Right ventricle myocardium inferior (tissue), 1 donor: ENCODE measurements at regions of chr3 and their contacts with region 1.

Region 1: DNA sequence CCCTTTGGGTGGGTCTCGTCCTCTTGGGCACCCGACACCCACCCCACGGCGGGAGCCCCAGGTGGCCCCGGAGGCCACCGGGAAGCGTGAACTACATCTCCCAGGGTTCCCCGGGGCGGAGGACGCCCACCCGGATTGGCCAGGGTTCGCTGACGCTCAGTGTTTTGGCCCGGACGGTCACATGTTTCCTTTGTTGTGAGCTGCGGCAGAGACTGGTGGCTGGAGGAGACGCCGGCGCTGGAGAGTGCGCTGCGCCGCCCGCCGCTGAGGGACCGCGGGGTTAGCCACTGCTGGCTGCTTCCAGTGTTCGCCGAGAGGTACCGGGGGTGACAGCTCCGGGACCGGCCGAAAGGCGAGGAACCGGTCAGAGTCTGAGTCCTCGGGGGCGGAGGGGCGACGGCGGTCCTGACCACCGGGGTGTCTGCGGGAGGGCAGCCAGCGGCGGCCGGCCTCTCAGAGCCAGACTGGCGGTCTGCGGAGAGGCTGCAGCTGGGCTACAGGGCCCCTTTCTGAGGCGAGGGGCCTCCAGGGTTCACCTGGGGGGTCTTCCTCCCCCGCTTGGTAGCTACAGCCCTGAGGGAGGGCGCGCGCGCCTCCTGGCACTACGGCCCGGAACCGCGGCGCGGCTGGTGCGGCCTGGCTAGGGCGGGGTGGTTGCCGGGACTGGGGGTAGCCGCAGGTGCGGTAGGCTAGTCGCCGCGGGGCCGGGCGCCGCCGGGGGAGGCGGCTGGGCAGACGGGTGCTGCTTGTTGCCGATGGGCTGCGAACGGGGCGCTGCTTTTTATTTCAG is at the start of gene KLHL24:
- DNase-seq: peak; percentile 96
- ATAC-seq: peak; percentile 91
- total RNA-seq, gene KLHL24: 228 TPM

Region 2: DNA sequence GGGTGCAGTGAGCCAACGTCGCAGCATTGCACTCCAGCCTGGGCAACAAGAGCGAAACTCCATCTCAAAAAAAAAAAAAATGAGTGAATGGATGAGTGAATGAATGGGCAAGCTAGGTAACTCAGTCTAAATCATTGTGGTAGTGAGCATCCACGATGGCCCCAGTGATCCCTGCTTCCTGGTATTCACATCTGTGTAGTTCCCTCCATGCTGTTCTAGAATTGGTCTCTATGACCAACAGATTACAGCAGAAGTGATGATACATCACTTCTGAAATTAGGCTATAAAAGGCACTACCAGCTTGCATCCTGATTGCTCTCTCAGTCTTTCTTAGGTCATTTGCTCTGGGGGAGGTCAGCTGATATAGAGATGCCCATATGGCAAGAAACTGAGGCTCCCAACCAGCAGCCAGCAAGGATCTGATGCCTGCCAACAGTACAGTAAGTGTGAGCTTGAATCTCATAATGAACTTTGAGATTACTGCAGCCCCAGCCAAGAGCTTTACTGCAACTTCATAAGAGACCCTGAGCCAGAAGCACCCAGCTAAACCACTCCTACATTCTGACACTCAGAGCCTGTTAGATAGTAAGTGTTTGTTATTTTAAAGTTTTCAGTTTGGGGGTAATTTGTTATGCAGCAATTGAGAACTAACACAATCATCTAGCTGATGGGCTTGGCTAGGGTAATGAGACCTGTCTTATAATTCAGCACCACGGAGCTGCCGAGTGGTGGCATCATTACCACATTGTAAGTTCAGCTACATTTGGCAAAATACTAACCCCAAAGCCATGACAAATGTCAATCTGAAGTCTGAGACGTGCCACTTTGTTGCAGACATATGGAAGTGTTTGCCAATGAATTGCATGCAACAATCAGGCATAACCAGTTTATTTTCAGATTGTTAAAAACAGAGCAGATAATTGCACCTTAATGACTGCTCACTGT is 133.1 kb before region 1 on chr3:
- intact Hi-C with region 1: loop called (anchors 10 kb)
- DNase-seq: no peak
- ATAC-seq: peak; percentile 74